GM10248 (cell line): ENCODE measurements at regions of chr10 and their contacts with region 1.

Region 1: GRCh38 chr10:63412304-63412703 is 53.5 kb downstream of the JMJD1C start:
- DNase-seq: no peak
- CTCF ChIP-seq: no peak

Region 2: DNA sequence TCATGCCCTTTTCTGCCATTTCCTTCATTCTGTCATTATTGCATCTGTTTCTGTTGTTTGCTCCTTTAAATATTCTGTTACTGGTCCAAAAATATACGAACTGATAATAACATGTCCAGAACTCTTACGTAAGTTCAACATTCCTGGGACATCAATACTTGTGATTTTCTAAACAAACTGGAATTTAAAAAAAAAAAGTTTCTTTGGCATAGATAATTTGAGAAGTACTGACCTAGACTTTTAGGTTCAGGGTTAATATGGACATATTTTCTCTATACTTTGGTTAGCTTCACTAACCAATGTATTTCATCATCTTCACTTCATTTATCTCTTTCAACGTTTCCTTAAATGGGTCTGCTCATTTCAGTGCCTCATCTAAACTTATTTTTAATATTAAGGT is 93.8 kb before region 1 on chr10:
- CTCF ChIA-PET with region 1: no interaction called
- POLR2A ChIA-PET with region 1: interaction called, 12 read pairs
- DNase-seq: no peak
- CTCF ChIP-seq: no peak

Region 3: DNA sequence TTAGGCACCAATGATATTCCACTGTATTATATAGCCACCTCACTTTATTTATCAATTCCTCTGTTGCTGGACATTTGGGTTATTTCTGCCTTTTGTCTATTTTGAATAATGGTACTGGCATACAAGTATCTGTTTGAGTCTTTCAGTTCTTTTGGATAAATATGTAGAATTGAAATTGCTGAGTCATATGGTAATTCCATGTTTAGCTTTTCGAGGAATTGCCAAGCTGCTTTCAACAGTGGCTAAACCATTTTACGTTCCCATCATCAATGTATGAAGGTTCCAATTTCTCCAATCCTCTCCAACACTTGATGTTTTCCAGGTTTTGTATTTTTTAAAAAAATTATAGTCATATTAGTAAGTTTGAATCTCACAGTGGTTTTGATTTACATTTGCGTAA is 11.2 kb after region 1 on chr10:
- CTCF ChIA-PET with region 1: no interaction called
- POLR2A ChIA-PET with region 1: no interaction called
- DNase-seq: no peak
- CTCF ChIP-seq: no peak